Ovary (tissue), 10 donors: ENCODE measurements at regions of chr1 and their contacts with region 1.

Region 1: GRCh38 chr1:184664042-184664655 is 90.5 kb downstream of the EDEM3 start:
- DNase-seq: peak; percentile 80 to 89 (median 85)
- H3K4me3 ChIP-seq: peak overlapping the region; percentile 21
- H3K27ac ChIP-seq: no peak overlapping the region
- H3K4me1 ChIP-seq: no peaks in the 10 kb centered on the region
- H3K27me3 ChIP-seq: no peaks in the 10 kb centered on the region
- CTCF ChIP-seq: peak; percentile 55 to 94 (median 90)
- EP300 ChIP-seq: no peak
- POLR2A ChIP-seq: no peak

Region 2: DNA sequence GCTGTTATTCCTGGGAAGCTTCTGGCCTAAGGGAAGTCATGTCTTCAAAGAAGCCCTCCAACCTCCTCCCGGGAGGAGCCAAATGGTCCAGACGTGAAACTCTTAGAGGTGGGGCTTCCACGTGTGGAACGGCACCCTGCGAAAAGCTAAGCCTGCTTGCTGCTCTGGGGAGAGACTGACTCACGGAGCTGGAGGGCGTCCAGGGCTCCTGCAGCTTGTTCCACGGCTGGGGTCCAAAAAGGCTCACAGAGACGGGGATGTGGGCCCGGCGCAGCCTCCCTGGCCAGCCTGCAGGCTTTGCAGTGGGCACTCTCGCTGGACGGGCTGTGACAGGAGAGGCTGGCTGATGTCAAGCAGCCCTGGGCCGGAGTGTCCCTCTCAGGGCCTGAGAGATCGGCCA is 731.7 kb before region 1 on chr1:
- intact Hi-C with region 1: no loop called
- DNase-seq: peak; percentile 83 to 90 (median 85)
- H3K4me3 ChIP-seq: no peak overlapping the region
- H3K27ac ChIP-seq: peak overlapping the region in 1 of 2 donors; percentile 0
- H3K4me1 ChIP-seq: no peaks in the 10 kb centered on the region
- H3K27me3 ChIP-seq: no peaks in the 10 kb centered on the region
- CTCF ChIP-seq: no peak
- EP300 ChIP-seq: no peak
- POLR2A ChIP-seq: no peak

Region 3: DNA sequence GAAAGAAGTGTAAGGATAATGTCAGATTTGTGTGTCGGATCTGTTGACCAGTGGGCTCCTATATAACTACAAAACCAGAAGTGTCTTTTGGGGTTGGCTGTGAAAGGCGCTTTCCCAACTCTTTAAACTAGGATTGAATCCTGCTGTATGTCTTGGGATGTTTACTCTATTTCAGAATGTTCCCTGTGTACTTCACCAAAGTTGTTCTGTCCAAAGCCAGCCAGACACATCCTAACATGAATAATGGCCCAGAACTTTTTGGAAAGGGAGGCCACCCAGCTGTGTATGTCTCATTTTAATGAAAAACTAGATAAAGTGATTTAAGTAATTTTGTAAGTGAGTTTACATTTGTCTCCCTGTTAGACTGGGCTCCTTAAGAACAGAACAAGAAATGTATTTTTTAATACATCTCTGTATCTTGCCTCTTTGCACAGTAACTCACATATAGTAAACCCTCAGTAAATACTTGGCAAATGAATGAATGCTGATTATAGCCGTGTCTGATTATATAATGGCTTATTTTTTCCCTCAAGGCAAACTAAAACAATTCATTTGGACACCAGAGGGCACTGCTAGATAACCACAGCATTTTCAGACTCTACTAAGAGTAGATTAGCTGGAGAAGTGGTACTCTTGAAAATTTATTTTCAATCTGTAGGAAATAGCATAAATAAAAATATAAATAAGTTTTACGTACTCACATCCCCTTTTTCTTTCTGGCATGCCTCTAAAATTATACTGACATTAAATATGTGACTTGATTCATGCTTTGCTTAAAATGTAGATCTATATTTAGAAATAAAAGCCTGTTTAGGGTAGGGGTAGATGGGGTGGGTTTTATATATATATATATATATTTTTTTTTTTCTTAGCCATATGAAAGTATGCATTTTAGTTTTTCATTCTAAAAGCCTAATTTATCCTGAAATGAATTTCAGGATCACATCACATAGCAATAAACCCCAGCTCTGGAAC is 588.8 kb before region 1 on chr1:
- intact Hi-C with region 1: loop called in 3 of 4 experiments (anchors 2 to 10 kb)
- DNase-seq: peak in 3 of 5 donors; percentile 18 to 51 (median 19)
- H3K4me3 ChIP-seq: no peak overlapping the region
- H3K27ac ChIP-seq: peak overlapping the region in 1 of 2 donors; percentile 35
- H3K4me1 ChIP-seq: no peaks in the 10 kb centered on the region
- H3K27me3 ChIP-seq: no peaks in the 10 kb centered on the region
- CTCF ChIP-seq: peak; percentile 53 to 87 (median 84)
- EP300 ChIP-seq: no peak
- POLR2A ChIP-seq: no peak

Region 4: GRCh38 chr1:184386312-184387068 is 277.7 kb before region 1 on chr1 and contains the start of gene C1orf21:
- intact Hi-C with region 1: loop called in 2 of 4 experiments (anchors 5 to 10 kb)
- DNase-seq: peak; percentile 91 to 93 (median 92)
- H3K4me3 ChIP-seq: peak within 1 kb of the TSS; percentile 94
- H3K27ac ChIP-seq: peak within 1 kb of the TSS; percentile 69 to 84
- H3K4me1 ChIP-seq: peaks cover 3% of the 10 kb centered on the region
- H3K27me3 ChIP-seq: no peaks in the 10 kb centered on the region
- CTCF ChIP-seq: no peak
- EP300 ChIP-seq: no peak
- POLR2A ChIP-seq: peak; percentile 84
- total RNA-seq, gene C1orf21: 26.2 to 64.9 (median 59.4) TPM

Region 5: GRCh38 chr1:184691719-184692324 is 27.7 kb after region 1 on chr1:
- intact Hi-C with region 1: no loop called
- DNase-seq: no peak
- H3K4me3 ChIP-seq: no peak overlapping the region
- H3K27ac ChIP-seq: no peak overlapping the region
- H3K4me1 ChIP-seq: no peaks in the 10 kb centered on the region
- H3K27me3 ChIP-seq: no peaks in the 10 kb centered on the region
- CTCF ChIP-seq: peak; percentile 43 to 62 (median 61)
- EP300 ChIP-seq: no peak
- POLR2A ChIP-seq: no peak

Region 6: GRCh38 chr1:184910691-184911091 is 246.5 kb after region 1 on chr1:
- intact Hi-C with region 1: no loop called
- DNase-seq: peak in 1 of 5 donors; percentile 48
- H3K4me3 ChIP-seq: no peak overlapping the region
- H3K27ac ChIP-seq: no peak overlapping the region
- H3K4me1 ChIP-seq: no peaks in the 10 kb centered on the region
- H3K27me3 ChIP-seq: no peaks in the 10 kb centered on the region
- CTCF ChIP-seq: no peak
- EP300 ChIP-seq: no peak
- POLR2A ChIP-seq: no peak

Region 7: DNA sequence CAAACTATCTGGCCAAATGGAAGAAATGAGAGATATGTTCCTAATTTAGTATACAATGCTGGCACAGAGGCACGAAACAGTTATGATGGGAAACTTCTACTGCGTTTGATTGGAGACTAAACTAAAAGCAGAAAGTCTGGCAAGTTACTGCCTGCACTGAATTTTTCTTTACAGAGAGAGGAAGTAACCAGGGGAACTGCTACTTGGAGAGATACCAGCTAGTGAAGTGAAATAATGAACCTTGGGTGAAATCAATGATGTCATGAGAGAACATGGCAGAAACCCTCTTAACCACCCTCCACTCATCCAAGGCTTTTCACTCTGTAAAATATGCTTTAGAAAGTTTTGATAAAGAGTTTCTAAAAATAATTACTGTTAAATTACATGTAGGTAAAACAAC is 280.9 kb after region 1 on chr1:
- intact Hi-C with region 1: no loop called
- DNase-seq: no peak
- H3K4me3 ChIP-seq: no peak overlapping the region
- H3K27ac ChIP-seq: no peak overlapping the region
- H3K4me1 ChIP-seq: no peaks in the 10 kb centered on the region
- H3K27me3 ChIP-seq: no peaks in the 10 kb centered on the region
- CTCF ChIP-seq: no peak
- EP300 ChIP-seq: no peak
- POLR2A ChIP-seq: no peak